HepG2 (cell line): ENCODE measurements at regions of chr2 and their contacts with region 1.

Region 1: GRCh38 chr2:233061591-233062450 is 1.7 kb downstream of the INPP5D start:
- DNase-seq: peak; percentile 88
- ATAC-seq: peak; percentile 76
- H3K4me3 ChIP-seq: peak overlapping the region; percentile 66 to 87 (median 80)
- H3K27ac ChIP-seq: peak overlapping the region; percentile 82
- H3K4me1 ChIP-seq: peaks cover 78% of the 10 kb centered on the region
- H3K27me3 ChIP-seq: no peaks in the 10 kb centered on the region; a peak in 1 of 5 replicates
- CTCF ChIP-seq: peak; percentile 76
- EP300 ChIP-seq: peak; percentile 19 to 30; a peak in 1 of 4 replicates
- POLR2A ChIP-seq: peak in 1 of 2 experiments; percentile 66; a peak in 2 of 4 replicates
- RAD21 ChIP-seq: peak; percentile 69

Region 2: DNA sequence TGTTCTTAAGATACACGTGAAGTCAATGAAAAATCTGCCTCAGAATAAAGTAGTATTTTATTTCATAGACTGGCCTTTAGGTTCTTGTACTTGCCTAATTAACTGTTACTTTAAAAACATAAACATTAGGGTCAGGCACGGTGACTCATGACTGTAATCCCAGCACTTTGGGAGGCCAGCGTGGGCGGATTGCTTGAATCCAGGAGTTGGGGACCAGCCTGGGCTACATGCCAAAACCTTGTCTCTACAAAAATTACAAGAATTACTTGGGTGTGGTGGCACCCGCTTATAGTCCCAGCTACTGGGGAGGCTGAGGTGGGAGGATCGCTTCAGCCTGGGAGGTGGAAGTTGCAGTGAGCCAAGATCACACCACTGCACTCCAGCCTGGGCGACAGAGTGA is 207.7 kb before region 1 on chr2:
- CTCF ChIA-PET with region 1: no interaction called
- POLR2A ChIA-PET with region 1: interaction called, 40 read pairs
- in situ Hi-C with region 1: no loop called
- intact Hi-C with region 1: loop called (anchors 2 kb)
- DNase-seq: no peak
- ATAC-seq: no peak
- H3K4me3 ChIP-seq: no peak overlapping the region
- H3K27ac ChIP-seq: no peak overlapping the region
- H3K4me1 ChIP-seq: peaks cover 58% of the 10 kb centered on the region
- H3K27me3 ChIP-seq: no peaks in the 10 kb centered on the region
- CTCF ChIP-seq: no peak
- EP300 ChIP-seq: no peak
- POLR2A ChIP-seq: no peak
- RAD21 ChIP-seq: no peak

Region 3: GRCh38 chr2:232988765-232989085 is 73.1 kb before region 1 on chr2:
- CTCF ChIA-PET with region 1: no interaction called
- POLR2A ChIA-PET with region 1: no interaction called
- in situ Hi-C with region 1: no loop called
- intact Hi-C with region 1: loop called (anchors 1 kb)
- DNase-seq: no peak
- ATAC-seq: no peak
- H3K4me3 ChIP-seq: no peak overlapping the region
- H3K27ac ChIP-seq: no peak overlapping the region
- H3K4me1 ChIP-seq: peaks cover 16% of the 10 kb centered on the region
- H3K27me3 ChIP-seq: no peaks in the 10 kb centered on the region
- CTCF ChIP-seq: no peak
- EP300 ChIP-seq: no peak; a peak in 1 of 4 replicates
- POLR2A ChIP-seq: no peak
- RAD21 ChIP-seq: no peak

Region 4: GRCh38 chr2:233012301-233012971 is 49.4 kb before region 1 on chr2:
- CTCF ChIA-PET with region 1: no interaction called
- POLR2A ChIA-PET with region 1: interaction called, 24 read pairs
- in situ Hi-C with region 1: no loop called
- intact Hi-C with region 1: loop called (anchors 2 kb)
- DNase-seq: peak; percentile 65
- ATAC-seq: peak; percentile 53
- H3K4me3 ChIP-seq: peak overlapping the region; percentile 66 to 93 (median 80)
- H3K27ac ChIP-seq: peak overlapping the region; percentile 93
- H3K4me1 ChIP-seq: peaks cover 42% of the 10 kb centered on the region
- H3K27me3 ChIP-seq: no peaks in the 10 kb centered on the region; a peak in 1 of 5 replicates
- CTCF ChIP-seq: no peak
- EP300 ChIP-seq: peak in 1 of 2 experiments; percentile 55; a peak in 1 of 4 replicates
- POLR2A ChIP-seq: peak; percentile 34 to 42; a peak in 1 of 4 replicates
- RAD21 ChIP-seq: no peak

Region 5: GRCh38 chr2:233084488-233084887 is 22.7 kb after region 1 on chr2:
- CTCF ChIA-PET with region 1: interaction called, 4 read pairs
- POLR2A ChIA-PET with region 1: interaction called, 21 read pairs
- in situ Hi-C with region 1: no loop called
- intact Hi-C with region 1: loop called (anchors 1 kb)
- DNase-seq: no peak
- ATAC-seq: peak; percentile 17; the same call in 2 of the 3 replicates
- H3K4me3 ChIP-seq: no peak overlapping the region
- H3K27ac ChIP-seq: peak overlapping the region; percentile 81
- H3K4me1 ChIP-seq: peaks cover 45% of the 10 kb centered on the region
- H3K27me3 ChIP-seq: no peaks in the 10 kb centered on the region
- CTCF ChIP-seq: no peak
- EP300 ChIP-seq: no peak
- POLR2A ChIP-seq: no peak
- RAD21 ChIP-seq: no peak

Region 6: DNA sequence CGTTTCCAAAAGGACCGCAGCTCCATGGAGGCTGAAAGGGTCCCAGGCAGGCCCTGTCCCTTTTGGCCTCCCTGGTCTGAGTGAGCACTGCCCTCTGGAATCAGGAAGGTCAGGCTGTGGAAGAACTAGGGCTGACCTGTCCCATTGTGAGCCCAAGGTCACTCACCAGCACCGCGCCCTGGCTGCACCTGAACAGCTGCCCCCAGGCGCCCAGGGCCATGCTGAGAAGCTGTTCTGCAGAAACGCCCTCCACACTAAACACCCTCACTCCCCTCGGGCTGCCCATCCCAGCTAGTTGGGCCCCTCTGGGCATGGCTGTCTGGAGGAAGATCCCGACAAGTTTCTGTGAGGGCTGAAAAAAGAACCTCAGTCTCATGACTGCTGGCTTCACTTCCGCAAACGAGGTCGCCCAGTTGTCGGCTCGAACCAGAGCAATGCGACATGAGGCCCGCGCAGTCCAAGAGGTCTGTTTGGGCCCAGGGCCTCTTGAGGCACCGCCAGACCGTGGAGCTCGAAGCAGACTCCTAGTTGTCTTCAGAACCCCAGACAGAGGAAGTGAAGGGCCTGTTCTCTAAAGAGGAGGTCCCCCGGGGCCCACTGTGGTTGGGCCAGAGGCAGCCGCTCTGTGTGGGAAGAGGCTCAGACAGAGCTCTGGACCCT is 62.7 kb after region 1 on chr2:
- CTCF ChIA-PET with region 1: no interaction called
- POLR2A ChIA-PET with region 1: no interaction called
- in situ Hi-C with region 1: no loop called
- intact Hi-C with region 1: loop called (anchors 5 kb)
- DNase-seq: no peak
- ATAC-seq: peak; percentile 64
- H3K4me3 ChIP-seq: no peak overlapping the region
- H3K27ac ChIP-seq: no peak overlapping the region
- H3K4me1 ChIP-seq: peaks cover 12% of the 10 kb centered on the region
- H3K27me3 ChIP-seq: no peaks in the 10 kb centered on the region
- CTCF ChIP-seq: peak; percentile 30; the same call in 1 of the 2 replicates
- EP300 ChIP-seq: no peak
- POLR2A ChIP-seq: no peak
- RAD21 ChIP-seq: no peak